Activated CD4-positive, alpha-beta T cell treated with anti-CD3 and anti-CD28 coated beads for 36 hours (primary cell): ENCODE measurements at regions of chr22 and their contacts with region 1.

Region 1: GRCh38 chr22:40651563-40652501 is 15.3 kb upstream of the MRTFA start:
- DNase-seq: peak; percentile 97
- ATAC-seq: peak; percentile 99
- H3K4me3 Mint-ChIP-seq: peak overlapping the region; percentile 64
- H3K27ac Mint-ChIP-seq: peak overlapping the region; percentile 88
- H3K4me1 Mint-ChIP-seq: peaks cover 21% of the 10 kb centered on the region
- H3K27me3 Mint-ChIP-seq: no peaks in the 10 kb centered on the region

Region 2: DNA sequence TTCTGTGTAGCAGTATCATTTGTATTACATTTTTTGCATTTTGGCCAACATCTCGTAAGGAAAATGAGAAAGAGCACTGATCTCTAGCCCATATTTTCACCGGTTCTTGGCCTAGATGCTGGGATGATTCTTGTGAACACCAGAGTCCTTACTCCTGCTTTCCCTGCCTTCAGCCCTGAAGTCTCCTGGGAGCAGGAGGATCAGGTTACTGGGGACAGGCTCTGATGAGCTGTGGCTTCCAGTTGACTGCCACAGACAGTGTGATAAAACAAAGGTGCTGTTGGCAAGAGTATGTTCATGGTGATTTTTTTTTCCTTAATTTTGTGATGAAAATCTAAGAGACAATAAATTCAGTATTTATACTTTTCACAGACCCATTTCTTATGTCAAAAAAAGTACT is 339.8 kb before region 1 on chr22:
- CTCF ChIA-PET with region 1: no interaction called
- POLR2A ChIA-PET with region 1: no interaction called
- intact Hi-C with region 1: no loop called
- DNase-seq: no peak
- ATAC-seq: no peak
- H3K4me3 Mint-ChIP-seq: no peak overlapping the region
- H3K27ac Mint-ChIP-seq: no peak overlapping the region
- H3K4me1 Mint-ChIP-seq: peaks cover 32% of the 10 kb centered on the region
- H3K27me3 Mint-ChIP-seq: no peaks in the 10 kb centered on the region

Region 3: GRCh38 chr22:40533712-40534378 is 118.0 kb before region 1 on chr22:
- CTCF ChIA-PET with region 1: interaction called, 48 read pairs
- POLR2A ChIA-PET with region 1: interaction called, 3 read pairs
- intact Hi-C with region 1: loop called in 1 of 2 experiments (anchors 1 kb)
- DNase-seq: peak; percentile 66
- ATAC-seq: peak; percentile 88
- H3K4me3 Mint-ChIP-seq: peak overlapping the region; percentile 78
- H3K27ac Mint-ChIP-seq: peak overlapping the region; percentile 92
- H3K4me1 Mint-ChIP-seq: peaks cover 66% of the 10 kb centered on the region
- H3K27me3 Mint-ChIP-seq: no peaks in the 10 kb centered on the region

Region 4: DNA sequence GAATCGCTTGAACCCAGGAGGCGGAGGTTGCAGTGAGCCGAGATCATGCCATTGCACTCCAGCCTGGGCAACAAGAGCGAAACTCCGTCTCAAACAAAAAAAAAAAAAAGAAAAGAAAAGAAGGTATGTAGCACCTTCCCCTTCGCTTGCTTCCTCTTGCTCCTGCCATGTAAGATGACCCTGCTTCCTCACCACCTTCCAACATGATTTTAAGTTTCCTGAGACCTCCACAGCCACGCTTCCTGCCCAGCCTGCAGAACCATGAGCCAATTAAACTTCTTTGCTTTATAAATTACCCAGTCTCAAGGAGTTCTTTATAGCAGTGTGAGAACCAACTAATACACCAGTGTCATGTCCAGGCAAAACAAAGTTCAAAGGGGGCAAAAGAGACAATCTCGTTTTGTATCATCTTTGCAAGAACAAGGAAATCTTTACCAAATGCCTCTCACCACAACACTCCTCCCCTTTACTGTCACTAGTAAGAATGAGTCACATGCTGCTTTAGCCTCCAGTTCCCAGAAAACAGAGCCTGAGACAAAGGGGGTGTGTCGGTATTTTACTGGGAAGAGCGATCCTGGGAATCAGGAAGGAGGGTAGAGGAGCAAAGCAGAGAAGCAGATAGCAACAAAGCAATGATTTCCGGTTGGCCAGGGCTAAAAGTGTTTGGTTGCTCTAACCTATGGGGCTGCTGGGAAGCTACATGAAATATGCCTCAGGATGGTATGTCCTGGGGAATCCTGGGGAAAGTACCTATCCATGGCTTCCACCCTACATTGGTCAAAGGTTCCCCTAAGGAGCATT is 17.0 kb after region 1 on chr22:
- CTCF ChIA-PET with region 1: interaction called, 5 read pairs
- POLR2A ChIA-PET with region 1: interaction called, 5 read pairs
- intact Hi-C with region 1: loop called (anchors 1 to 2 kb)
- DNase-seq: peak; percentile 30
- ATAC-seq: peak; percentile 91
- H3K4me3 Mint-ChIP-seq: no peak overlapping the region
- H3K27ac Mint-ChIP-seq: peak overlapping the region; percentile 92
- H3K4me1 Mint-ChIP-seq: peaks cover 21% of the 10 kb centered on the region
- H3K27me3 Mint-ChIP-seq: no peaks in the 10 kb centered on the region

Region 5: GRCh38 chr22:40714192-40714951 is 62.5 kb after region 1 on chr22:
- CTCF ChIA-PET with region 1: interaction called, 3 read pairs
- POLR2A ChIA-PET with region 1: no interaction called
- intact Hi-C with region 1: loop called in 1 of 2 experiments (anchors 1 kb)
- DNase-seq: no peak
- ATAC-seq: no peak
- H3K4me3 Mint-ChIP-seq: no peak overlapping the region
- H3K27ac Mint-ChIP-seq: no peak overlapping the region
- H3K4me1 Mint-ChIP-seq: peaks cover 20% of the 10 kb centered on the region
- H3K27me3 Mint-ChIP-seq: peaks cover 3% of the 10 kb centered on the region

Region 6: DNA sequence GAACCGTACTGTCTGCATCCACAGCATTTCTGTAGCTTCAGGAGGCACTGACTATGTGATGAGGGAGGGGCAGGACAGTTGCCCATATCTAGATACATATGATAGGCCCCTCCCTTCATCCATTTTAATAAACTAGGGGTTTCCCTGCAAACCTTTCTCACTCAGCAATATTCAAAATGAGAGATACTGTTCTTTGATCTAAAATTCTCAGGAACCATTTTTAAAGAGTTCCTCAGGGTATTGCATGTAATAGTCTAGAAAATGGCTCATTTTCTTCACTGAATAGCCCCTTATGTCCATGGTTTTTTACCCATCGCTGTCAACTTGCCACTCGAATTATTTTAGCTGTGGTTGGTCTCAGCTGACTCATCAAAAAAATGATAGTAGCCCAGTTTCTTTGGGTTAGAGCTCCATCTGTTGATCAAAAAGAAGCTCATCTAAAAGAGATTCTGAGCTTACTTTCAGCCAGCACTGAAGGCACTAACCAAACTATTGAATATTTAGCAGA is 247.1 kb after region 1 on chr22:
- CTCF ChIA-PET with region 1: interaction called, 10 read pairs
- POLR2A ChIA-PET with region 1: interaction called, 3 read pairs
- intact Hi-C with region 1: loop called in 1 of 2 experiments (anchors 10 kb)
- DNase-seq: peak; percentile 38
- ATAC-seq: peak; percentile 94
- H3K4me3 Mint-ChIP-seq: peak overlapping the region; percentile 15
- H3K27ac Mint-ChIP-seq: peak overlapping the region; percentile 81
- H3K4me1 Mint-ChIP-seq: peaks cover 14% of the 10 kb centered on the region
- H3K27me3 Mint-ChIP-seq: no peaks in the 10 kb centered on the region